Activated T-helper 1 cell treated with anti-CD3 and anti-CD28 coated beads, Interleukin-12 subunit alpha, Interleukin-12 subunit beta, Interleukin-2, Interleukin-4 antibody, amounts not matched to agents 30 ng/mL and 10 ng/mL and 1 ng/mL, durations not matched to agents 14 hours and 24 hours and 36 hours (primary cell): ENCODE measurements at regions of chr1 and their contacts with region 1.

Region 1: GRCh38 chr1:26233903-26234643 is at the start of gene CEP85:
- DNase-seq: peak; percentile 98
- H3K4me3 Mint-ChIP-seq: peak within 1 kb of the TSS; percentile 100
- H3K27ac Mint-ChIP-seq: peak within 1 kb of the TSS; percentile 96
- H3K4me1 Mint-ChIP-seq: peaks cover 43% of the 10 kb centered on the region
- H3K27me3 Mint-ChIP-seq: peaks cover 4% of the 10 kb centered on the region
- total RNA-seq, gene CEP85: 37.0 and 37.1 TPM in 2 replicates

Region 2: GRCh38 chr1:25912076-25912831 is 321.8 kb before region 1 on chr1:
- intact Hi-C with region 1: no loop called
- DNase-seq: no peak
- H3K4me3 Mint-ChIP-seq: no peak overlapping the region
- H3K27ac Mint-ChIP-seq: no peak overlapping the region
- H3K4me1 Mint-ChIP-seq: peaks cover 7% of the 10 kb centered on the region
- H3K27me3 Mint-ChIP-seq: peaks cover 13% of the 10 kb centered on the region

Region 3: DNA sequence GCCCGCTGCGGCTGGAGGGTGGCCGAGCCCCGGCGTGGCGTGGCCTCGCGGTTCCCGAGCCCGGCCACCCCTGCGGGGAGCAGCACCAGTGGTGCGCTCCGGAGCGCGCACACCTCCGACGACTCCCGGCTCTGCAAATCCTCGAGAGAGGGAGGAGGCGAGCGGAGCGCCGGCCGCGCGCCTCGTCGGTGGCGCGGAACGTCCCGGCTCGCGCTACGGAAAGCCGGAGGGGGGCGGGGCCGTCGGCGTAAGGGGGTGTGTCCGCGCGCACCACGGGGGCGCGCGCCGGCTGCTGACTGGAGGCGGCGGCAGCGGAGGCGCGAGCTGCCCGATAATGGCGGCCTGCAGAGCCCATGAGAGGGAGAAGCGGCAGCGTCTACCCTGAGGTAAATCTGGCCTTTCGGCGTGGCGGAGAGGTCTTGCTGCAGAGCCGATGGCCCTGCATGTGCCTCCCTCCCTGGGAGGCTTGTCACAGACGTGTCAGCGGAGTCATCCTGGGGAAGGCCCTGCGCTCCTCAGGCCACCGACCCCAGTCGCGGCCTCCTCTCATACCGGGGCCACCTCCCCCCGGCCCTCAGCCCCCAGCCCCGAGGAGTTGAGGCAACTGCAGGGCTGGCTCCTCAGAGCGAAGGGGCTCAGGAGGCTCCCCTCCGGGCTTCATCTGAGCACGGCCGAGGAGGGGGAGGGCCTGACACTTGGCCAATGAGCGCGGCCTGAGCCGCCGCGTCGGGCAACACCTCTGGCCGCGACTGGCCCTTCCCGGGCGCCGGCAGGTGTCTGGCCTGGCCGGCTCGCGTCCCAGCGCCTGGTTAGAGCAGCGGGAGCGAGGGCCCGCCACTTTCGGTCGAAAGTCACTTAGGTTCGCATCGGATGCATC is 122.3 kb before region 1 on chr1 and contains the start of gene PDIK1L:
- intact Hi-C with region 1: loop called (anchors 1 kb)
- DNase-seq: peak; percentile 91
- H3K4me3 Mint-ChIP-seq: peak within 1 kb of the TSS; percentile 96
- H3K27ac Mint-ChIP-seq: peak within 1 kb of the TSS; percentile 92
- H3K4me1 Mint-ChIP-seq: peaks cover 36% of the 10 kb centered on the region
- H3K27me3 Mint-ChIP-seq: no peaks in the 10 kb centered on the region
- total RNA-seq, gene PDIK1L: 15.5 and 18.9 TPM in 2 replicates

Region 4: GRCh38 chr1:26190373-26190987 is 43.6 kb before region 1 on chr1 and contains the start of gene CATSPER4:
- intact Hi-C with region 1: loop called (anchors 5 kb)
- DNase-seq: no peak
- H3K4me3 Mint-ChIP-seq: no peak within 1 kb of the TSS
- H3K27ac Mint-ChIP-seq: no peak within 1 kb of the TSS
- H3K4me1 Mint-ChIP-seq: peaks cover 26% of the 10 kb centered on the region
- H3K27me3 Mint-ChIP-seq: peaks cover 10% of the 10 kb centered on the region
- total RNA-seq, gene CATSPER4: not detected in 2 replicates

Region 5: GRCh38 chr1:26284597-26285360 is 50.7 kb after region 1 on chr1:
- intact Hi-C with region 1: loop called (anchors 2 kb)
- DNase-seq: peak; percentile 88
- H3K4me3 Mint-ChIP-seq: peak overlapping the region; percentile 81
- H3K27ac Mint-ChIP-seq: peak overlapping the region; percentile 97
- H3K4me1 Mint-ChIP-seq: peaks cover 70% of the 10 kb centered on the region
- H3K27me3 Mint-ChIP-seq: no peaks in the 10 kb centered on the region

Region 6: GRCh38 chr1:26321315-26322041 is 87.4 kb after region 1 on chr1:
- intact Hi-C with region 1: loop called (anchors 1 kb)
- DNase-seq: peak; percentile 88
- H3K4me3 Mint-ChIP-seq: peak overlapping the region; percentile 85
- H3K27ac Mint-ChIP-seq: peak overlapping the region; percentile 94
- H3K4me1 Mint-ChIP-seq: peaks cover 55% of the 10 kb centered on the region
- H3K27me3 Mint-ChIP-seq: no peaks in the 10 kb centered on the region

Region 7: GRCh38 chr1:26431979-26432695 is 198.1 kb after region 1 on chr1 and contains the start of gene DHDDS:
- intact Hi-C with region 1: loop called (anchors 1 kb)
- DNase-seq: peak; percentile 98
- H3K4me3 Mint-ChIP-seq: peak within 1 kb of the TSS; percentile 94
- H3K27ac Mint-ChIP-seq: peak within 1 kb of the TSS; percentile 89
- H3K4me1 Mint-ChIP-seq: peaks cover 18% of the 10 kb centered on the region
- H3K27me3 Mint-ChIP-seq: peaks cover 12% of the 10 kb centered on the region
- total RNA-seq, gene DHDDS: 58.4 and 60.9 TPM in 2 replicates